CD8-positive, alpha-beta T cell (primary cell): ENCODE measurements at regions of chr22 and their contacts with region 1.

Region 1: DNA sequence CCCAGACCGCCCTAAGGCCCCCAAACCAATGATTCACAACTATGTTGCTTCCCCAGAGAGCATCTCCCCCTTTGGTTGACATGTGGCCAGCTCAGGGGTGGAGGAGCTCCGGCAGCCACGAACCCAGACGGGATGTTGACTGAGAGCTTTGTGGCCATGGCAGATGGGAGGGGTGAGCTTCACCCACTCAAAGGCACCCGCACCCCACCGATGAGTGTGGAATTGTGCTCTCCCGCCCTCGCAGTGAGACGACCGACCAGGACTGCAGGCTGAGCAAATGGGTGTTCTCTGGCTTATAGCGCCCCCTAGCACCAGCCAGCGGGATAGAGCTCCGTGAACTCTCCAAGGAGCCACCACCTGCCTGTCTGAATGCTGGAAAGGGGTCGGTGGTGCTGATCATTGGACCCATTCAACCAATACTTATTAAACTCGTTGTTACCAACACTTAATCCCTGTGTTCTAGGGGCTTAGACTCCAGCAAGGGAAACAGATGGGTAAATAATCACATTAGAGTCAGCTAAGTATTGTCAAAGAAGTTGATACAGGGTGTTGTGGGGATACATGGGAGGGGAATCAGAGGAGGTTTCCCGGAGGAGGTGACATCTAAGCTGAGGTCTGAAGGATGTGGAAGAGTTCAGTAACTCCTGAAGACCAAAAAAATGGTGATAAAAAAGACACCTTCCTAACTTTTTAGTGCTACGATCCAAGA is 4.5 kb upstream of the TIMP3 start:
- DNase-seq: peak; percentile 3 to 67 (median 54)
- ATAC-seq: peak; percentile 61
- H3K4me3 ChIP-seq: no peak overlapping the region
- H3K4me3 Mint-ChIP-seq: no peak overlapping the region
- H3K27ac ChIP-seq: no peak overlapping the region
- H3K27ac Mint-ChIP-seq: no peak overlapping the region
- H3K4me1 ChIP-seq: no peaks in the 10 kb centered on the region
- H3K4me1 Mint-ChIP-seq: peaks cover 5% of the 10 kb centered on the region
- H3K27me3 ChIP-seq: peaks cover 0 to 4% of the 10 kb centered on the region in 2 experiments
- H3K27me3 Mint-ChIP-seq: peaks cover 27% of the 10 kb centered on the region
- CTCF ChIP-seq: peak; percentile 69

Region 2: DNA sequence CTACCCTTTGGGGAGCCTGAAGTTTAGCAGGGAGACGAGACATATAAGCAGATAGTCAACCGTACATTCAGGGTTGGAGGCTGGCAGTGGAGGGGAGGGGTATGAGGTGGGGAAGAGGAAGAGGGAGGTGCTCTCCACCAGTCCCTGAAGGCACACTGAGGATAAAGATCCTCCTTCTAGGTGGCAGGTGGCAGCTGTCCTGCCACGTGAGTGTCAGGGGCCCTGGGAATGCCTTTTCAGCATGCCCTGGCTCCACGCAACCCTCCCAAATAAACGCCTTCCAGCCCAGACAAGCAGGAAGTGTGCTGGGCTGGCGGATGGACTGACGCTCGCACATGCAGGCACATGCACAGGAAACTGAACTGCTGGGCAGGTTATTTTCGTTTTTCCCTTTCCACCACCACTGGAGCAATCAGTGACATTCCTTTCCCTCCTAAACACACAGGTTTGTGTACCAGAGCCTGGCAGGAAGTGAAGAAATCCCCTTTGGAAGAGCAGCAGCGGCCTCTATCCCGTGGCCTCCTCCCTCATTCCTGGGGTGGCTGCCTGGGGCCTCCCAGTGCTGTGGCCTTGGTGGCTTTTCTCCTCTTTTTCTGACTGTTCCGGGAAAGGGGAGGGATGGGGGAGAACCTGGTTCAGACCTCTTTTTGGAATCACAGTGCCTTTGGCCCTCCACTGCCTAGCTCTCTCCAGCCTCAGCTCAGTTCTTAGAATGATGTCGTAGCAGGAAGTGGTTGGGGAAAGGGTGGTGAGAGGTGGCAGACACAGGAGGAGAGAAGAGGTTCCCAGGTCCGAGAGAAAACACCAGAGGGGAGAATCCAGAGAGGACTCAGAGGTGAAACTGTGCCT is 152.5 kb before region 1 on chr22:
- CTCF ChIA-PET with region 1: no interaction called
- POLR2A ChIA-PET with region 1: no interaction called
- intact Hi-C with region 1: loop called in 1 of 2 experiments (anchors 5 kb)
- DNase-seq: peak in 6 of 9 experiments; percentile 10 to 66 (median 24)
- ATAC-seq: peak; percentile 49
- H3K4me3 ChIP-seq: peak overlapping the region; percentile 22
- H3K4me3 Mint-ChIP-seq: peak overlapping the region; percentile 79
- H3K27ac ChIP-seq: peak overlapping the region; percentile 45 to 52
- H3K27ac Mint-ChIP-seq: peak overlapping the region; percentile 94
- H3K4me1 ChIP-seq: peaks cover 14% of the 10 kb centered on the region
- H3K4me1 Mint-ChIP-seq: peaks cover 16% of the 10 kb centered on the region
- H3K27me3 ChIP-seq: no peaks in the 10 kb centered on the region
- H3K27me3 Mint-ChIP-seq: peaks cover 2% of the 10 kb centered on the region
- CTCF ChIP-seq: no peak

Region 3: DNA sequence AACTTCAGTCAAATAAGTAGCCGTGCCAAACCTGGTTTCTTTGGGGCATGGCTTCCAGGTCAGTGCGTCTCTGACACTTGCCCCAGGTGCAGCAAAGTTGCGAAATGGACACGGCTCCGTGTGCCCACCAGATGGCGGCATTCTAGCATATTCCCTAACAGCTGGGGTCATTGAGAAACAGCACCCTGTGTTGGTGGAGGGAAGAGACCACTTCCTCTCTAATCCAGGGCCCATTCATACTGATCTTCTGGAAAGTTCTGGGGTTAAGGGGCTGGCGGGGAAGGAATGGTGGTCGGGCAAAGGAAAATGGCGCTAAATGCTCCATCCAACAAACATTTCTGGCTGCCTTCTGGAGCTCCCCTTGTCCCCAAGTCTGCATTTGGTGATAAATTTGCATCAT is 136.7 kb before region 1 on chr22:
- CTCF ChIA-PET with region 1: interaction called, 137 read pairs
- POLR2A ChIA-PET with region 1: no interaction called
- intact Hi-C with region 1: loop called in 1 of 2 experiments (anchors 1 kb)
- DNase-seq: peak; percentile 8 to 66 (median 53)
- ATAC-seq: no peak
- H3K4me3 ChIP-seq: no peak overlapping the region
- H3K4me3 Mint-ChIP-seq: no peak overlapping the region
- H3K27ac ChIP-seq: no peak overlapping the region
- H3K27ac Mint-ChIP-seq: no peak overlapping the region
- H3K4me1 ChIP-seq: no peaks in the 10 kb centered on the region
- H3K4me1 Mint-ChIP-seq: peaks cover 4% of the 10 kb centered on the region
- H3K27me3 ChIP-seq: no peaks in the 10 kb centered on the region
- H3K27me3 Mint-ChIP-seq: peaks cover 6% of the 10 kb centered on the region
- CTCF ChIP-seq: peak; percentile 61

Region 4: GRCh38 chr22:32810561-32811004 is 13.6 kb after region 1 on chr22:
- CTCF ChIA-PET with region 1: interaction called, 12 read pairs
- POLR2A ChIA-PET with region 1: no interaction called
- intact Hi-C with region 1: no loop called
- DNase-seq: no peak
- ATAC-seq: no peak
- H3K4me3 ChIP-seq: no peak overlapping the region
- H3K4me3 Mint-ChIP-seq: no peak overlapping the region
- H3K27ac ChIP-seq: no peak overlapping the region
- H3K27ac Mint-ChIP-seq: no peak overlapping the region
- H3K4me1 ChIP-seq: no peaks in the 10 kb centered on the region
- H3K4me1 Mint-ChIP-seq: no peaks in the 10 kb centered on the region
- H3K27me3 ChIP-seq: no peaks in the 10 kb centered on the region
- H3K27me3 Mint-ChIP-seq: peaks cover 2% of the 10 kb centered on the region
- CTCF ChIP-seq: no peak

Region 5: GRCh38 chr22:33083212-33083611 is 286.2 kb after region 1 on chr22:
- CTCF ChIA-PET with region 1: no interaction called
- POLR2A ChIA-PET with region 1: no interaction called
- intact Hi-C with region 1: no loop called
- DNase-seq: no peak
- ATAC-seq: no peak
- H3K4me3 ChIP-seq: no peak overlapping the region
- H3K4me3 Mint-ChIP-seq: no peak overlapping the region
- H3K27ac ChIP-seq: no peak overlapping the region
- H3K27ac Mint-ChIP-seq: no peak overlapping the region
- H3K4me1 ChIP-seq: no peaks in the 10 kb centered on the region
- H3K4me1 Mint-ChIP-seq: no peaks in the 10 kb centered on the region
- H3K27me3 ChIP-seq: no peaks in the 10 kb centered on the region
- H3K27me3 Mint-ChIP-seq: peaks cover 21% of the 10 kb centered on the region
- CTCF ChIP-seq: no peak